SK-N-SH (cell line): ENCODE measurements at regions of chr2 and their contacts with region 1.

Region 1: DNA sequence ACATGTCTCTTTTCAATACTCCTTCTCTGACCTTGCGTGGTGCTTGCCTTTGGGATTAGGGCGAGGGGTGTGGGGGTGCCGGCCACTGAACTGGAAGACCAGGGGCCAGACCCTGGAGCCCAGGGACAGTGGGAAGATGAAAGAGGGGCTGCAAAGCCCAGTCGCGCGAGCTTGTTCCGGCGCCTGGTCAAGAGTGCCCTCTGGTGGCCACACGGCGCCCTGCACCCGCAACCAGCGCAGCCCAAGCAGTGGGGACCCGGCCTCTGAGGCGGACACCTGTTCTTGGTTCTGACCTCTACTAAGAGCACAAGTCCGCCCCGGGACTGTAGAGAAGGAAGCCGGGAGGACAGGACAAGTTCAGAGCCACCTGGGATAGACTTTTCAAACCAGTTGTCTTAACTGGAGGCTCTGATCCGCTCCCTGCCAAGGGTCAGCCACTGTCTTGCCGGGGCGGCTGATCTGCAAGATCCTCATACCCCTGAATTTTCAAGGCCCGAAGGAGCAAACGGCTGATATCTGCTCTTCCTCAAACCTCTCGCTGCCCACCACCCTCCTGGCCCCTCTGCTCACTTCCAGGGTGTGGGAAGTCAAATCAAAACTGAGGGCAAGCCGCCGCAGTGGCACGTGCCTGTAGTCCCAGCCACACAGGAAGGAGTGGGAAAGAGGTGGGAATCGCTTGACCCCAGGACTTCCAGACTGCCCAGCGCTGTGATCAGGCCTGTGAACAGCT is 14.9 kb upstream of the MSH6 start:
- DNase-seq: peak; percentile 90
- H3K4me3 ChIP-seq: peak overlapping the region in 1 of 2 experiments; percentile 28; a peak in 2 of 4 replicates
- H3K27ac ChIP-seq: no peak overlapping the region
- H3K4me1 ChIP-seq: no peaks in the 10 kb centered on the region
- H3K27me3 ChIP-seq: no peaks in the 10 kb centered on the region
- CTCF ChIP-seq: peak; percentile 99
- EP300 ChIP-seq: no peak; a peak in 1 of 4 replicates
- RAD21 ChIP-seq: peak; percentile 97

Region 2: GRCh38 chr2:47344890-47345589 is 423.0 kb before region 1 on chr2:
- CTCF ChIA-PET with region 1: interaction called, 19 read pairs
- POLR2A ChIA-PET with region 1: no interaction called
- DNase-seq: peak; percentile 95
- H3K4me3 ChIP-seq: peak overlapping the region; percentile 58 to 69
- H3K27ac ChIP-seq: peak overlapping the region; percentile 93 to 99
- H3K4me1 ChIP-seq: peaks cover 5 to 21% of the 10 kb centered on the region in 2 experiments; a peak in 3 of 4 replicates
- H3K27me3 ChIP-seq: no peaks in the 10 kb centered on the region
- CTCF ChIP-seq: peak; percentile 36; the same call in 1 of the 2 replicates
- EP300 ChIP-seq: peak in 1 of 2 experiments; percentile 73; a peak in 2 of 4 replicates
- RAD21 ChIP-seq: no peak

Region 3: GRCh38 chr2:47437287-47437686 is 330.8 kb before region 1 on chr2:
- CTCF ChIA-PET with region 1: interaction called, 228 read pairs
- POLR2A ChIA-PET with region 1: no interaction called
- DNase-seq: peak; percentile 64
- H3K4me3 ChIP-seq: no peak overlapping the region
- H3K27ac ChIP-seq: no peak overlapping the region
- H3K4me1 ChIP-seq: no peaks in the 10 kb centered on the region
- H3K27me3 ChIP-seq: no peaks in the 10 kb centered on the region
- CTCF ChIP-seq: peak; percentile 63
- EP300 ChIP-seq: no peak
- RAD21 ChIP-seq: peak; percentile 68

Region 4: GRCh38 chr2:47520825-47521665 is 247.0 kb before region 1 on chr2:
- CTCF ChIA-PET with region 1: interaction called, 16 read pairs
- POLR2A ChIA-PET with region 1: no interaction called
- DNase-seq: peak; percentile 96
- H3K4me3 ChIP-seq: peak overlapping the region; percentile 52 to 60
- H3K27ac ChIP-seq: peak overlapping the region in 1 of 2 experiments; percentile 34; a peak in 1 of 4 replicates
- H3K4me1 ChIP-seq: peaks cover 0 to 15% of the 10 kb centered on the region in 2 experiments; a peak in 1 of 4 replicates
- H3K27me3 ChIP-seq: no peaks in the 10 kb centered on the region
- CTCF ChIP-seq: peak; percentile 45
- EP300 ChIP-seq: no peak
- RAD21 ChIP-seq: peak; percentile 38

Region 5: GRCh38 chr2:47653902-47654789 is 113.9 kb before region 1 on chr2:
- CTCF ChIA-PET with region 1: interaction called, 24 read pairs
- POLR2A ChIA-PET with region 1: no interaction called
- DNase-seq: peak; percentile 69
- H3K4me3 ChIP-seq: no peak overlapping the region
- H3K27ac ChIP-seq: no peak overlapping the region
- H3K4me1 ChIP-seq: peaks cover 0 to 11% of the 10 kb centered on the region in 2 experiments; a peak in 1 of 4 replicates
- H3K27me3 ChIP-seq: peaks cover 20% of the 10 kb centered on the region; the same call in 1 of the 2 replicates
- CTCF ChIP-seq: peak; percentile 49
- EP300 ChIP-seq: no peak
- RAD21 ChIP-seq: peak; percentile 47

Region 6: GRCh38 chr2:47782671-47783485 is 14.8 kb after region 1 on chr2 and contains the start of gene MSH6:
- CTCF ChIA-PET with region 1: interaction called, 98 read pairs
- POLR2A ChIA-PET with region 1: no interaction called
- DNase-seq: peak; percentile 100
- H3K4me3 ChIP-seq: peak within 1 kb of the TSS; percentile 65 to 95
- H3K27ac ChIP-seq: peak within 1 kb of the TSS; percentile 89 to 94
- H3K4me1 ChIP-seq: peaks cover 2 to 13% of the 10 kb centered on the region in 2 experiments; a peak in 3 of 4 replicates
- H3K27me3 ChIP-seq: no peaks in the 10 kb centered on the region
- CTCF ChIP-seq: 0 out of 2 replicates have a peak, but pooled peaks have one; percentile 9
- EP300 ChIP-seq: peak; percentile 5 to 25; a peak in 2 of 4 replicates
- RAD21 ChIP-seq: no peak
- polyA plus RNA-seq, gene MSH6: 16.4 and 16.6 TPM in 2 replicates

Region 7: DNA sequence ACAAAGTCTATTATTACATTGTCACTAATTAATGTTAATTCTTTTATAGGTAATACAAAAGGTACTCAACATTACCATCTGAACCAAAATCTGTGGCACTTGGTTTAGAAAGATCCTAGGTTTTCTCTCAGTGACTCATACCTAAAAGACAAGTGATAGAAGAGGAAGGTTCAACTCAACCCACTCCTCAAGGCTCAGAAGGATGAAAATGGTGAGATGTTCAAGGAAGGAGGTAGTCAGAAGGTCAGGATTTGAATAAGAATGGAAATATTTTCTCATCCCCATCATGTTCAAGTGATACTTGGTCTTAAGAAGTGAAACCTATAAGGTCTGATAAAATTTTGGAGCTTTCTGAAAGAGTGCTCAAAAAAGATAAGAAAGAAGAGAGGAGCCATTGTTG is 224.6 kb after region 1 on chr2:
- CTCF ChIA-PET with region 1: no interaction called
- POLR2A ChIA-PET with region 1: no interaction called
- DNase-seq: no peak
- H3K4me3 ChIP-seq: no peak overlapping the region
- H3K27ac ChIP-seq: no peak overlapping the region
- H3K4me1 ChIP-seq: no peaks in the 10 kb centered on the region
- H3K27me3 ChIP-seq: no peaks in the 10 kb centered on the region; the same call in 1 of the 2 replicates
- CTCF ChIP-seq: no peak
- EP300 ChIP-seq: no peak
- RAD21 ChIP-seq: no peak

Region 8: GRCh38 chr2:48219555-48220436 is 451.8 kb after region 1 on chr2:
- CTCF ChIA-PET with region 1: no interaction called
- POLR2A ChIA-PET with region 1: no interaction called
- DNase-seq: no peak
- H3K4me3 ChIP-seq: no peak overlapping the region
- H3K27ac ChIP-seq: no peak overlapping the region
- H3K4me1 ChIP-seq: no peaks in the 10 kb centered on the region
- H3K27me3 ChIP-seq: no peaks in the 10 kb centered on the region
- CTCF ChIP-seq: no peak
- EP300 ChIP-seq: no peak
- RAD21 ChIP-seq: no peak